ENCODE measurements at regions of chr20 and their contacts with region 1.

Region 1: GRCh38 chr20:39004508-39004907 is 42.4 kb downstream of the DHX35 start:
- DNase-seq: peak; percentile 46 to 64
- H3K4me3 ChIP-seq: no peak overlapping the region
- H3K27ac ChIP-seq: no peak overlapping the region
- H3K4me1 ChIP-seq: no peaks in the 10 kb centered on the region
- H3K27me3 ChIP-seq: no peaks in the 10 kb centered on the region
- CTCF ChIP-seq: no peak

Region 2: GRCh38 chr20:38973645-38974044 is 30.9 kb before region 1 on chr20:
- CTCF ChIA-PET with region 1: no interaction called
- POLR2A ChIA-PET with region 1: interaction called, 11 read pairs
- intact Hi-C with region 1: no loop called
- DNase-seq: no peak
- H3K4me3 ChIP-seq: no peak overlapping the region
- H3K27ac ChIP-seq: no peak overlapping the region
- H3K4me1 ChIP-seq: peaks cover 8% of the 10 kb centered on the region; the same call in 1 of the 2 replicates
- H3K27me3 ChIP-seq: no peaks in the 10 kb centered on the region
- CTCF ChIP-seq: no peak

Region 3: DNA sequence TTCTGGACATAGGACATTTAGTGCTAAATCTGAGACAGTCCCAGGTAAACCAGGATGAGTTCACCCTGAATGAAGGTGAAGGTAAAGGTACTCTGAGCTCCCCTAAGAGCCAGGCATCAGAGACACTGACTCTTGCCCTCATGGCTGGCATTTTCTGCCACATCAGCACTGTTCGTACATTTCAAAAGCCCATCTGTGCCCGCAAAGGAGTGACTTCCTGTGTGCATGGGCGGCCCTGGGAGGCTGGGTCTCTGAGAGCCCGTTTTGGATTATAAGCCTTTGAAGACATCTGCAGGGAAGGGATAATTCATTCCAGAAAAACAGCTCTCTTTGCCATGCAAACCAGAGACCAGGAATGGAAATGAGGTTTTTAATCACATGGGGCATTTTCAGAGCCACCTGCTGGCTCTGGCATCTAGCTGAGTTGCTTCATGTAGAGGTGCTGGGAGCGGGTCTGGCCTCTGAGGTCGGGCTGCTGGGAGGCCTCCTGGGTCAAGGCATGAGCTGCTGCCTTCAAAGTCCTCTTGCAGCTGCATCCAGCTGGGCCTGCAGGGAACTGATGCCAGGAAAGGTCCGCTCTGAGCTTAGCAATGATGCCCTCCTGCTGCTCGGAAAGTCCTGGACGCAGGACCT is 306.0 kb after region 1 on chr20:
- CTCF ChIA-PET with region 1: interaction called, 14 read pairs
- POLR2A ChIA-PET with region 1: no interaction called
- intact Hi-C with region 1: no loop called
- DNase-seq: no peak
- H3K4me3 ChIP-seq: no peak overlapping the region
- H3K27ac ChIP-seq: no peak overlapping the region
- H3K4me1 ChIP-seq: no peaks in the 10 kb centered on the region
- H3K27me3 ChIP-seq: peaks cover 54% of the 10 kb centered on the region
- CTCF ChIP-seq: no peak

Region 4: DNA sequence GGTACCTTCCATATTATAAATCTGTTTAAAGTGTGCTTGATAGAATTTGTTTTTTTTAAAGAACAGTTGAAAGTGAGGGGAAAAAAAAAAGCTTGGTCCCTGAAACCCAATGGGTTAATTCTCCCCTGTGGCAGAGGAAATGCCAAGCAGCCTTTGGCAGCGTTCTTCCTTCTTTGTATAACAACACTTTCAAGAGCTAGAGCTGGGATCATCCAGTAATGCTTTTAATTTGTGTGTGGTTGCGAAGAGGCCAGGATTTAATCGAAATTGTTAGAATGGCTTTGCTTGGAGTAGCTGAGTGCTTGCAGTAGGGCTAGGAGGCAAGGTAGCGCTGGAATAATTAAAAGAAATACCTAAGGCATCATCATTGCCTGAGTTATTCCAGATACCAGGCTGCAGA is 649.7 kb after region 1 on chr20:
- CTCF ChIA-PET with region 1: no interaction called
- POLR2A ChIA-PET with region 1: no interaction called
- intact Hi-C with region 1: no loop called
- DNase-seq: no peak
- H3K4me3 ChIP-seq: no peak overlapping the region
- H3K27ac ChIP-seq: no peak overlapping the region
- H3K4me1 ChIP-seq: no peaks in the 10 kb centered on the region
- H3K27me3 ChIP-seq: peaks cover 47% of the 10 kb centered on the region
- CTCF ChIP-seq: no peak

Region 5: DNA sequence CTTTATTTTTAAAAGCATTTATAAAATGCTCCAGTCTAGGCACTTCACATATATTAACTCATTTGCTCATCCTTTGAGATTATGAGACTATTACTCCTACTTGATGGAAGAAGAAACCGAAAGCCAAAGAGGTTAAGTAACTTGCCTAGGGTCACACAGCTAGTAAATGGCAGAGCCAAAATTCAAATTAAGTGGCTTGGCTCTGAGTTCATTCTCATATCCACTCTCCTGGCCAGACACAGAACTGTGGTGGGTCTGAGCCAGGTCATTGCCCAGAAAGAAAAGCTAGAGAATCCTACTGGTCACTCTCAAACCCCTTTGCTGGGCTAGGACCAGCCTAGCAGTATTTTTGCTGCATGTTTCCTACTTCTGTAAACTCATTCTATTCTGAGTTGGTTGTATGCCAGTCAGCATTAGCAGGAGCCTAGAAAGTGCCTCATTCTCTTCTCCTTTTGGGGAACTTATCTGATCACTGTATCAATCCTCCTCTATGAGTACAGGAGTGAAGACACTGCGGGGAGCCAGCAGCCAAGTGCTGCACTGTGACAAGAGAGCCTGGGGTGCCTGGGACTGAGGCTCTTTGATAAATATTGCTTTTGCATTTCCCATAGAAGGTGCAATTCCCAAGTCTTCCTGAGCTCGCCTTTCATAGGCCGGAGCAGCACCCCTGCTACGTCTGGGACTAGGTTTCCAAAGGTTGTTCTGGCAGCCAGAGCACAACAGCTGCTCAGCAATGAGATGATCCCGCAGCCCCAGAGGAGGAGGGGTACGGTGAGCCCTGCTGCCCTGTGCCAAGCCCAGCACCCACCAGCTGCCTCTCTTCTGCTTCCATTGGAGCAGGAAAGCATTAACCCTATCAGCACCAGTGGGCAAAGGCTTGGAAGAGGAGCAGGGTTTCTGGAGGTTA is 956.3 kb after region 1 on chr20:
- CTCF ChIA-PET with region 1: no interaction called
- POLR2A ChIA-PET with region 1: no interaction called
- intact Hi-C with region 1: no loop called
- DNase-seq: no peak
- H3K4me3 ChIP-seq: no peak overlapping the region
- H3K27ac ChIP-seq: no peak overlapping the region
- H3K4me1 ChIP-seq: no peaks in the 10 kb centered on the region
- H3K27me3 ChIP-seq: peaks cover 15% of the 10 kb centered on the region; the same call in 1 of the 2 replicates
- CTCF ChIP-seq: no peak